Caco-2 (cell line): ENCODE measurements at regions of chr21 and their contacts with region 1.

Region 1: GRCh38 chr21:25790122-25790877 is 55.5 kb downstream of the GABPA start:
- DNase-seq: peak in 1 of 2 experiments; percentile 21
- H3K4me3 ChIP-seq: peak overlapping the region; percentile 37
- H3K4me3 Mint-ChIP-seq: peak overlapping the region; percentile 77
- H3K27ac Mint-ChIP-seq: peak overlapping the region; percentile 46
- H3K4me1 ChIP-seq: no peaks in the 10 kb centered on the region; the same call in 1 of the 2 replicates
- H3K4me1 Mint-ChIP-seq: no peaks in the 10 kb centered on the region
- H3K27me3 ChIP-seq: no peaks in the 10 kb centered on the region
- H3K27me3 Mint-ChIP-seq: peaks cover 3% of the 10 kb centered on the region
- CTCF ChIP-seq: peak; percentile 49 to 50

Region 2: DNA sequence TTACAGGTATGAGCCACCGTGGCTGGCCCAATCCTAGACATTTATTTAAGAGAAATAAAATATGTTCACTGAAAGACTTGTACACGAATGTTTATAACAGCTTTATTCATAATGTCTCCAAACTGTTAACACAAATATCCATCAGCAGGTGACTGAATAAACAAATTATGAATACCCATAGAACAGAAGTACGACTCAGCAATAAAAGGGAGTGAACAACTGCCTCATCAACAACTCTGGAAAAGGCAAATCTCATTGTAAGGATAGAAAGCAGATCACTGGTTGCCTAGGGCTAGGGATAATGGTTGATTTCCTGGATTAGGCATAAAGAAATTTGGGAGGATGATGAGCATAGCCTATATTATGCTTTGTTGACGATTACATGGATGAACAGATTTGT is 13.9 kb before region 1 on chr21:
- CTCF ChIA-PET with region 1: no interaction called
- POLR2A ChIA-PET with region 1: no interaction called
- intact Hi-C with region 1: no loop called
- DNase-seq: no peak
- H3K4me3 ChIP-seq: no peak overlapping the region
- H3K4me3 Mint-ChIP-seq: no peak overlapping the region
- H3K27ac Mint-ChIP-seq: no peak overlapping the region
- H3K4me1 ChIP-seq: no peaks in the 10 kb centered on the region
- H3K4me1 Mint-ChIP-seq: no peaks in the 10 kb centered on the region
- H3K27me3 ChIP-seq: no peaks in the 10 kb centered on the region
- H3K27me3 Mint-ChIP-seq: no peaks in the 10 kb centered on the region
- CTCF ChIP-seq: no peak

Region 3: DNA sequence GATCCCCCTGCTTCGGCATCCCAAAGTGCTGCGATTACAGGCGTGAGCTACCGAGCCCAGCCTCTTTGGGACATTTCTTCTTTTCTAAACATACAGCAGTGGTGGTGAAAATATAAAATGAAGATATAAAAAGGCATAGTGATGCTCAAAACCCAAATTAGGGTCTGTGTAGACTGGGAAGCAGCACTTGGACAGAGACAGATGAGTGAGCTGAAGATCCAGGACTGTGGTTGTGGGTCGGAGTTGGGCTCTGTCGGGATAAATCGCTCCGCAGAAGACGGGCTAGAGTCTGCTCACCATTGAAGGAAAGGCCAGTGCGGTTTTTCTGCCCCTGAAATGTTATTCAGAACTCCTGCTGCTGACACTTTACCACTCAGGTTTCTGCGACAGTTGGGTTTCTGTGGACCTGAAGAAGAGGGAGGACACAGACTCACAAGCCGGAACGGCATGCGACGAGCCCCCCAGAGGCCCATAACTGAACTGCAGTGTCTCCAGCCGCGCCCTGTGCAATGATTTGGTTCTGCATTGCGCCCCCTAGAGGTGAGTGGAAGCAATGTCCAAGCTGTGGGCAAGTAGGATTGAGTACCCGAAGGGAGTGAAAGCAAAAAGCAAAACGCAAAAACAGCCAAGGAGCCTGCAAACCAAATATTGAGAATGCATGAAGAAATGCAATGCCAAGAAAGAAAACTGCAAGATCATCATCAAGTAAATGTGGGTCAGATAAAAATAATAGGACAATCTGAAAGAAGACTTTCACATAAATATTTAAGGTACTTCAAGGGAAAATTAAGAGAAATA is 11.1 kb after region 1 on chr21:
- CTCF ChIA-PET with region 1: interaction called, 7 read pairs
- POLR2A ChIA-PET with region 1: no interaction called
- intact Hi-C with region 1: loop called (anchors 1 kb)
- DNase-seq: peak; percentile 89 to 91
- H3K4me3 ChIP-seq: no peak overlapping the region
- H3K4me3 Mint-ChIP-seq: peak overlapping the region; percentile 45
- H3K27ac Mint-ChIP-seq: no peak overlapping the region
- H3K4me1 ChIP-seq: no peaks in the 10 kb centered on the region
- H3K4me1 Mint-ChIP-seq: peaks cover 7% of the 10 kb centered on the region
- H3K27me3 ChIP-seq: no peaks in the 10 kb centered on the region
- H3K27me3 Mint-ChIP-seq: peaks cover 21% of the 10 kb centered on the region
- CTCF ChIP-seq: peak; percentile 95 to 98

Region 4: GRCh38 chr21:25862596-25862995 is 72.3 kb after region 1 on chr21:
- CTCF ChIA-PET with region 1: no interaction called
- POLR2A ChIA-PET with region 1: no interaction called
- intact Hi-C with region 1: loop called (anchors 5 kb)
- DNase-seq: peak in 1 of 2 experiments; percentile 5
- H3K4me3 ChIP-seq: no peak overlapping the region
- H3K4me3 Mint-ChIP-seq: no peak overlapping the region
- H3K27ac Mint-ChIP-seq: no peak overlapping the region
- H3K4me1 ChIP-seq: no peaks in the 10 kb centered on the region
- H3K4me1 Mint-ChIP-seq: no peaks in the 10 kb centered on the region
- H3K27me3 ChIP-seq: no peaks in the 10 kb centered on the region
- H3K27me3 Mint-ChIP-seq: no peaks in the 10 kb centered on the region
- CTCF ChIP-seq: peak; percentile 42 to 50

Region 5: DNA sequence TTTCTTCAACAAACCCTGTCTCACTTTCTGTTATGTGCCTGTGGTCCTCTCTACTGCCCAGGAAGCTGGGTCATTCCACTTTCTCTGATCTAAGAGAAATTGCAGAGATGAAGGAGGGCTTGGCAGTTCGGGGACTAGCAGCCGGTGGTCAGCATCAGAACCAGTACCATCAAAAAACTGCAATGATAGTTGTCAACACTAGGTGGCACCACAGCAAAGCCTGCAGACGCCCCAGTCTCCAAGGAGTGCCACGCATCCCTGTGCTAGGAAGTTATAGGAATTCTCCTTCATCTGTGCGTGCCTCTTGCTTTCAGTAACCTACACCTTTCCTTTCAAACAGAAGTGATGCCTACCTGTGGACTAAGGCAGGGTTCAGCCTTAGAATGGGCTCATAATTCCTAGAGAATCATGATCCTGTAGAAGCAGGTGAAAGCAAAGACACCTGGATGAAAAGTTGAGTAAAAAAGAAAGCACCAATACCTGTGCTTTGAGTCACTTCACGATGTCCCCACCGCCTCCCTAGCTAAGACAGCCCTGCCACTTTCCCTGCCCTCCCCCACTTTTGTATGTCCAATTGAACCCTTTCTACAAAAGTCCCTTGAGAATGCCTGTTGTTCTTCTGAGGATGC is 925.7 kb after region 1 on chr21:
- CTCF ChIA-PET with region 1: no interaction called
- POLR2A ChIA-PET with region 1: no interaction called
- intact Hi-C with region 1: loop called (anchors 10 kb)
- DNase-seq: peak; percentile 37 to 43
- H3K4me3 ChIP-seq: no peak overlapping the region
- H3K4me3 Mint-ChIP-seq: no peak overlapping the region
- H3K27ac Mint-ChIP-seq: peak overlapping the region; percentile 44
- H3K4me1 ChIP-seq: peaks cover 5% of the 10 kb centered on the region; the same call in 1 of the 2 replicates
- H3K4me1 Mint-ChIP-seq: peaks cover 15% of the 10 kb centered on the region
- H3K27me3 ChIP-seq: no peaks in the 10 kb centered on the region
- H3K27me3 Mint-ChIP-seq: no peaks in the 10 kb centered on the region
- CTCF ChIP-seq: peak; percentile 52 to 56